Activated T-helper 2 cell treated with anti-CD3 and anti-CD28 coated beads, Interferon-gamma antibody, Interleukin-2, Interleukin-4, amounts not matched to agents 10 μg/mL and 5 μg/mL and 100 μg/mL, durations not matched to agents 14 hours and 24 hours and 36 hours (primary cell): ENCODE measurements at regions of chr15 and their contacts with region 1.

Region 1: GRCh38 chr15:100918034-100918689 is 995 bp upstream of the LRRK1 start:
- DNase-seq: peak; percentile 63
- H3K4me3 Mint-ChIP-seq: peak overlapping the region; percentile 78
- H3K27ac Mint-ChIP-seq: no peak overlapping the region
- H3K4me1 Mint-ChIP-seq: peaks cover 17% of the 10 kb centered on the region
- H3K27me3 Mint-ChIP-seq: peaks cover 65% of the 10 kb centered on the region

Region 2: GRCh38 chr15:100580414-100580813 is 337.7 kb before region 1 on chr15:
- intact Hi-C with region 1: no loop called
- DNase-seq: no peak
- H3K4me3 Mint-ChIP-seq: no peak overlapping the region
- H3K27ac Mint-ChIP-seq: peak overlapping the region; percentile 55
- H3K4me1 Mint-ChIP-seq: peaks cover 29% of the 10 kb centered on the region
- H3K27me3 Mint-ChIP-seq: no peaks in the 10 kb centered on the region

Region 3: DNA sequence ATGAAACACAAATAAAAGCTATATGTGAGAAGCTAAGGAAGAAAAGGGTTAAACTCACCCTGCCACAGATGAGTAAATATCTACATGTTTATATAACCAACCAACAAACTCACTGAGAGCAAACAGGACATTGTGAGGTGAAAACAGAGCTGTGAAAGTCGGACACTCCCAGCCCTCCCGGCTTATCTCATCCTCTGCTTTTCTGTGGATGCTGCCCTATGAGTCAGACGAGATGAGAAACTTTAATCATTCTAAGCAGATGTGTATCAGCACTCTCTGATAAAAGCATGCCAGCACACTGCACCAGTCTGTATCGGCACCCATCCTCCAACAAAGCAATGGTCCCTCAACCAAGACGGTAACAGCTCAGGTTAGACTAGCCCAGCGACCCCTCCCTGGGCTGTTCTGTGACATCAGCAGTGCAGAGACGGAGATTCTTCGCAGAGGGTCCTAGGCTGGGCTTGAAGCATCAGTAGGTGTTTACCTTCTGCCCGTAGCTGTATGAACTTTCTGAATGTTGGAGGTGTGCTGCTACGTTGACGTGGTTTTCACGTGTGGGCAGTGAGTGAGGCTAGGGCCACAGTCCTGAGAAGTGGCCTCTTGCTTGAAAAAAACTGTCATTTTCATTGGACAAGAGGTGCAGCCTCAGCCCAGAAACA is 158.3 kb before region 1 on chr15:
- intact Hi-C with region 1: no loop called
- DNase-seq: no peak
- H3K4me3 Mint-ChIP-seq: no peak overlapping the region
- H3K27ac Mint-ChIP-seq: no peak overlapping the region
- H3K4me1 Mint-ChIP-seq: peaks cover 25% of the 10 kb centered on the region
- H3K27me3 Mint-ChIP-seq: peaks cover 36% of the 10 kb centered on the region

Region 4: GRCh38 chr15:100947760-100948429 is 29.7 kb after region 1 on chr15:
- intact Hi-C with region 1: no loop called
- DNase-seq: no peak
- H3K4me3 Mint-ChIP-seq: no peak overlapping the region
- H3K27ac Mint-ChIP-seq: no peak overlapping the region
- H3K4me1 Mint-ChIP-seq: no peaks in the 10 kb centered on the region
- H3K27me3 Mint-ChIP-seq: peaks cover 12% of the 10 kb centered on the region

Region 5: GRCh38 chr15:101006934-101007691 is 89.0 kb after region 1 on chr15:
- intact Hi-C with region 1: loop called (anchors 1 kb)
- DNase-seq: peak; percentile 45
- H3K4me3 Mint-ChIP-seq: peak overlapping the region; percentile 86
- H3K27ac Mint-ChIP-seq: no peak overlapping the region
- H3K4me1 Mint-ChIP-seq: peaks cover 14% of the 10 kb centered on the region
- H3K27me3 Mint-ChIP-seq: peaks cover 12% of the 10 kb centered on the region

Region 6: DNA sequence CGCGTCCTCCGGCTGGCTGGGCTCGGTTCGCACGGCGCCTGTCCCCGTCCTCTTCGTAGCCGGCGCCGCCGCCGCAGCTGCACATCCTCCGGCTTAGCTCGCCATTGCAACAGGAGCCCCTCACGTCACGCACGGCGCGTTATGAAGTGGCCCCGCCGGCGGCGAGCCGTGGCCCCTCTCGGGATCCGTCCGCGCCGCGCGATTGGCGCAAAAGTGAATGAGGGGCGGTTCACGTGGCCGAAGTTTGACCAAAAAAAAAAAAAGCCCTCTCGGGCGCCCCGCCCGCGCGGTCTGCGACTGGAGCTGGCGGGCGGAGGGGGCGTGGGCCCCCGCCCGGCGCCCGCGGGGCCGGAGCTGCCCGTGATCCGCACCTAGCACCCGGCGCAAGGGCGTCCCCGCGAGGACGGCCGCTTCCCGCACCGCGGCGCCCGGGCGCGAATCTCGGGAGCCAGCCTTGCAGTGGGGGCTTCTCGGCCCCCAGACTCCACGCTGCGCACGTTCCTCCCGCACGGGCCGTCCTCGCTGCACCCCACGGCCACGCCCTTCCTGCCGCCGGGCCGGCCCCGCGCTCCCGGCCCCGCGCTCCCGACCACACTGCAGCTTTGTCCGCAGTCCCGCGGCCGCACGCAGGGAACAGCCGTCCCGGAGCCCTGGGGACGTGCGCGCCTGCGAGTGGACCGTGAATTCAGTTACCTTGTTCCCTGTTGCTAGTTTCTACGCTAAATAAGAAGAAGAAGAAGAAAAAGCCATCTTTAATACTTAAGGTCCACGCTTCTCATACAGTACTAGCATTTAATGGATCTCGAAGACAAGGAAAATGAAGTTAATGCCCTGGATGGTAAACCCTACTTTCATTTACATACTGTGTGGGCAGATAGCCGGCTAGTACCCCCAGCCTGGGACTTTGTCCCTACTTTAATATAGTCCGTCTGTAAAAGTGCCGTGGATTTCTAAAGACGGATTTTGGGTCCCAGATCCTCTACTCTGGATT is 334.0 kb after region 1 on chr15 and contains the start of gene CHSY1:
- intact Hi-C with region 1: loop called (anchors 10 kb)
- DNase-seq: peak; percentile 83
- H3K4me3 Mint-ChIP-seq: peak within 1 kb of the TSS; percentile 85
- H3K27ac Mint-ChIP-seq: peak within 1 kb of the TSS; percentile 84
- H3K4me1 Mint-ChIP-seq: peaks cover 57% of the 10 kb centered on the region
- H3K27me3 Mint-ChIP-seq: no peaks in the 10 kb centered on the region
- total RNA-seq, gene CHSY1: 50.5 and 52.2 TPM in 2 replicates